ENCODE measurements at regions of chr1 and their contacts with region 1.

Region 1: GRCh38 chr1:61851849-61852669 is 109.8 kb downstream of the PATJ start:
- DNase-seq: no peak
- ATAC-seq: peak; percentile 81
- H3K4me3 ChIP-seq: no peak overlapping the region
- H3K27ac ChIP-seq: no peak overlapping the region
- H3K4me1 ChIP-seq: no peaks in the 10 kb centered on the region
- H3K27me3 ChIP-seq: no peaks in the 10 kb centered on the region

Region 2: GRCh38 chr1:60153961-60154360 is 1698.1 kb before region 1 on chr1:
- intact Hi-C with region 1: loop called in 1 of 2 experiments (anchors 10 kb)
- DNase-seq: no peak
- ATAC-seq: no peak
- H3K4me3 ChIP-seq: no peak overlapping the region
- H3K27ac ChIP-seq: no peak overlapping the region
- H3K4me1 ChIP-seq: peaks cover 0 to 3% of the 10 kb centered on the region in 2 donors
- H3K27me3 ChIP-seq: no peaks in the 10 kb centered on the region

Region 3: GRCh38 chr1:60969971-60970509 is 882.0 kb before region 1 on chr1:
- intact Hi-C with region 1: loop called (anchors 5 to 10 kb)
- DNase-seq: no peak
- ATAC-seq: peak; percentile 78
- H3K4me3 ChIP-seq: no peak overlapping the region
- H3K27ac ChIP-seq: peak overlapping the region; percentile 49 to 74
- H3K4me1 ChIP-seq: peaks cover 6 to 12% of the 10 kb centered on the region in 2 donors
- H3K27me3 ChIP-seq: no peaks in the 10 kb centered on the region

Region 4: GRCh38 chr1:60978421-60979357 is 873.4 kb before region 1 on chr1:
- intact Hi-C with region 1: loop called (anchors 5 to 10 kb)
- DNase-seq: peak in 1 of 2 donors; percentile 59
- ATAC-seq: peak; percentile 45
- H3K4me3 ChIP-seq: no peak overlapping the region
- H3K27ac ChIP-seq: peak overlapping the region; percentile 54 to 82
- H3K4me1 ChIP-seq: peaks cover 1 to 13% of the 10 kb centered on the region in 2 donors
- H3K27me3 ChIP-seq: no peaks in the 10 kb centered on the region

Region 5: GRCh38 chr1:61343734-61344420 is 508.2 kb before region 1 on chr1:
- intact Hi-C with region 1: loop called in 1 of 2 experiments (anchors 5 kb)
- DNase-seq: no peak
- ATAC-seq: peak; percentile 31
- H3K4me3 ChIP-seq: peak overlapping the region in 1 of 2 donors; percentile 10
- H3K27ac ChIP-seq: peak overlapping the region in 1 of 2 donors; percentile 64
- H3K4me1 ChIP-seq: no peaks in the 10 kb centered on the region
- H3K27me3 ChIP-seq: no peaks in the 10 kb centered on the region

Region 6: GRCh38 chr1:61463220-61463619 is 388.8 kb before region 1 on chr1:
- intact Hi-C with region 1: loop called in 1 of 2 experiments (anchors 5 kb)
- DNase-seq: no peak
- ATAC-seq: no peak
- H3K4me3 ChIP-seq: no peak overlapping the region
- H3K27ac ChIP-seq: no peak overlapping the region
- H3K4me1 ChIP-seq: no peaks in the 10 kb centered on the region
- H3K27me3 ChIP-seq: no peaks in the 10 kb centered on the region

Region 7: GRCh38 chr1:61741711-61742619 is 110.1 kb before region 1 on chr1 and contains the start of gene PATJ:
- intact Hi-C with region 1: loop called in 1 of 2 experiments (anchors 5 kb)
- DNase-seq: peak; percentile 64 to 87
- ATAC-seq: peak; percentile 82
- H3K4me3 ChIP-seq: peak within 1 kb of the TSS; percentile 77 to 96
- H3K27ac ChIP-seq: peak within 1 kb of the TSS; percentile 78 to 92
- H3K4me1 ChIP-seq: peaks cover 0 to 4% of the 10 kb centered on the region in 2 donors
- H3K27me3 ChIP-seq: no peaks in the 10 kb centered on the region
- total RNA-seq, gene PATJ: 36.1 to 47.1 TPM

Region 8: GRCh38 chr1:61808968-61809367 is 43.1 kb before region 1 on chr1:
- intact Hi-C with region 1: no loop called
- DNase-seq: no peak
- ATAC-seq: peak; percentile 44
- H3K4me3 ChIP-seq: no peak overlapping the region
- H3K27ac ChIP-seq: no peak overlapping the region
- H3K4me1 ChIP-seq: peaks cover 0 to 5% of the 10 kb centered on the region in 2 donors
- H3K27me3 ChIP-seq: no peaks in the 10 kb centered on the region